ENCODE measurements at regions of chr18 and their contacts with region 1.

Region 1: GRCh38 chr18:46073474-46074331 is 1.6 kb upstream of the PSTPIP2 start:
- DNase-seq: peak; percentile 89

Region 2: GRCh38 chr18:45664824-45665763 is 408.6 kb before region 1 on chr18:
- in situ Hi-C with region 1: loop called (anchors 25 kb)
- DNase-seq: peak; percentile 75

Region 3: DNA sequence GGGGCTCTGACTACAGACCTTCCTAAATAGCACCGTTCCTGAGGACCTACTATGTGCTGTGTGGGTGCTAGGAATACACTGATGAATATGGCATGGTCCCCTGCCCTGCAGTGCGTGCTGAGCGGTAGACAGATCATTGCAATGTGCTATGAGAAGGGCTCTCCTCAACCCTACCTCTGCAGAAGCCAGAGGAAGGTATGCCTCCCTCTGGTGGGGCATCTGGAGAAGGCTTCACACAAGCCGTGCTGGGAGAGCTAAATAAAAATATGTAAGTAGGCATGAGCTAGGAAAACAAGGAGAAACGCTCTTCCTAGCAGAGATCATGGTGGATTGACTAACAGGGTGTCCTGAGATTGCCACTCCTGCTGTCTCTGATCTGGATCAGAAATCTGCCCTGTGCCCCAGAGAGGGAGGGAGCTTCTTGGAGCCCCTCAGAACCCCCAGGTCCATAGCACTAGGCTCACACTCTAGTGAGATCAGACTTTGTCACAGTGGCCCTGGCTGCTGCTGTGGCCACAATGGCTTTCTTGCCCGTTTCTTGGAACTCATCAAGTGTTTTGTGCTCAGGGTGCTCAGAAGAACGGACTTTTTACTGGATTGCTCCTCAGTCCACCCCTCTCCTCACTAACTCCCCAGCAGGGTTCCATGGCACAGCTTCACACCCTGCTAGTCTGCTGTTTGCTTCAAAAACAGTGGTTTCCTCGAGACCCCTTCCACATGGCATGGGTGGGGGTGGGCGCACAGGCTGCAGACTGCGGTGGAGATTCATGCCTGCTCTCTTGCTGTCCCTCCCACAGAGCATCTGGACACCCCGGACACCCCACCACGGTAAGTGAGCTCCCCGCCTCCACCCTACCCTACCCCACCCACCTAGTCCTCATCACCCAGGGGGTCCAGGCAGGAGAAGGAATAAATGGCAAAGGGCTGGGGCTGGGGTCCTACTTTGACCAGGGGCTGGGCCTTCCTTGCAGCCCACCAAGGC is 234.0 kb before region 1 on chr18:
- in situ Hi-C with region 1: no loop called
- DNase-seq: peak; percentile 55

Region 4: GRCh38 chr18:46250084-46250811 is 176.5 kb after region 1 on chr18:
- in situ Hi-C with region 1: no loop called
- DNase-seq: peak; percentile 83